ENCODE measurements at regions of chr16 and their contacts with region 1.

Region 1: GRCh38 chr16:30813821-30814189 is 26.8 kb upstream of the ZNF629 start:
- DNase-seq: no peak
- ATAC-seq: no peak; a peak in 1 of 6 replicates
- H3K4me3 ChIP-seq: peak overlapping the region; percentile 52
- H3K27ac ChIP-seq: peak overlapping the region; percentile 91 to 94
- H3K4me1 ChIP-seq: peaks cover 7% of the 10 kb centered on the region
- CTCF ChIP-seq: no peak
- EP300 ChIP-seq: no peak
- POLR2A ChIP-seq: no peak
- RAD21 ChIP-seq: no peak

Region 2: DNA sequence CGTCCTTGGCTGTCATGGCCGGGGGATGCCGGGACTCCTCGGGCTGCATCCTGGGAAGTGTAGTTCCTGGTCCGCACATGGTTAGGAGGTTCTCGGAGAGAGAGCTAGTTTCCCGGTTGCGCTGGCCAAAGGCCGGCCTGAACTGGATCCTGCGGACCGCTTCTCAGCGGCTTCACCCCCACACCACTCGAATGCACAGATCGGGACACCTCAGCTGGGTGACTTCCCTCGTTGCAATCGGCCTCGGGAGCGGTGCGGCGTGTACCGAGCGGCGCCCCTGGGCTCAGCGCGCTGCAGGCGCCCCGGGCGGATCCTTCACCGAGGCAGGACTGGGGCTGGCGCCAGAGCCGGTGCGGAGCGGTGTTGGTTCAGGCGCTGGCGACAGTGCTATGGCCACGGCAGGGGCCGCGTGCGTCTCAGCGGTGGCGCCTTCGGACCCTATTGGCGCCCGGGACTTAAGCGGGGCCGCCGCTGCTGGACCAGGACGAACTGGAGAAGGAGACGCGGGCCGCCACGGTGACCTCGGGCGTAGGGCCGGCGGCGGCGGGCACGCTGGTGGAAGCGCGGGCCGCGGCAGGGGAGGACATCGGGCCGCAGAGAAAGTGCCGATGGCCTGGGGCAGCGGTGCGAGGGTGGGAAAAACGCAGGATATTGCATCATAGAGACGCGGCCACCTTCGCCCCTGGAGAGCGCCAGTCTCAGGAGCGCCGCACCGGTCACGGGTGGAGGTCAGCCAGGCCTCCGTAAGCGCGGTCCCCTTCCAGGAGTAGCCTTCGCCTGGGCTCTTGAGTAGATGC is 38.2 kb before region 1 on chr16:
- CTCF ChIA-PET with region 1: interaction called, 10 read pairs
- POLR2A ChIA-PET with region 1: interaction called, 7 read pairs
- DNase-seq: peak; percentile 88 to 96
- ATAC-seq: peak; percentile 80 to 89
- H3K4me3 ChIP-seq: peak overlapping the region; percentile 59
- H3K27ac ChIP-seq: peak overlapping the region; percentile 91 to 99
- H3K4me1 ChIP-seq: peaks cover 11% of the 10 kb centered on the region
- CTCF ChIP-seq: no peak
- EP300 ChIP-seq: no peak
- POLR2A ChIP-seq: peak; percentile 71
- RAD21 ChIP-seq: no peak

Region 3: DNA sequence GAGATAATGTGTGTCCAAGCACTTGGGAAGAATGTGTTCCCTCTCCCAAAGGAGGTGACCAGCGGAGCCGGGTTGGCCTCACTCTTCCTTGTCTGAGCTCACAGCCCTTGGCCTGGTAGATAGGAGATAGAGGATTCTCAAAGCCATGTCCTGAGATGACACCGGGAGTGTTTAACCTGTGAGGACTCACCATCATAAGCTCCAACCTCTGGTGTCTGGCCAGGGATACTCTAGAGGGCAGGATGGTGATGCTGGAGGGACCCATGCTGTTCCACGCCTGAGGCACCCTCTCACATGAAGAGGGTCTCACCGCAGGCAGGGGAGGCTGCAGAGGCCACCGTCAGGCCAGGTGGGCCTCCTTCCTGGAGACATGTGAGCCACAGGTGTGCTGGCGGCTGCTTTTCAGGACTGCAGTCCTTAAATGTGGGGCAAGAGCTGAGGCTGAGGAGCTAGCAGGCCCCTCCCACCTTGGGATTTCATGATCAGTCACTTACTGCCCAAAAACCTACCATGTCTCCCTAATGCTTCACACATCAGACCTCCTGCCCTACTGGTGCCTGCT is 20.2 kb before region 1 on chr16:
- CTCF ChIA-PET with region 1: interaction called, 20 read pairs
- POLR2A ChIA-PET with region 1: no interaction called
- DNase-seq: no peak
- ATAC-seq: peak; percentile 27 to 30; a peak in 3 of 6 replicates
- H3K4me3 ChIP-seq: no peak overlapping the region
- H3K27ac ChIP-seq: no peak overlapping the region
- H3K4me1 ChIP-seq: no peaks in the 10 kb centered on the region
- CTCF ChIP-seq: no peak
- EP300 ChIP-seq: no peak
- POLR2A ChIP-seq: no peak
- RAD21 ChIP-seq: no peak

Region 4: DNA sequence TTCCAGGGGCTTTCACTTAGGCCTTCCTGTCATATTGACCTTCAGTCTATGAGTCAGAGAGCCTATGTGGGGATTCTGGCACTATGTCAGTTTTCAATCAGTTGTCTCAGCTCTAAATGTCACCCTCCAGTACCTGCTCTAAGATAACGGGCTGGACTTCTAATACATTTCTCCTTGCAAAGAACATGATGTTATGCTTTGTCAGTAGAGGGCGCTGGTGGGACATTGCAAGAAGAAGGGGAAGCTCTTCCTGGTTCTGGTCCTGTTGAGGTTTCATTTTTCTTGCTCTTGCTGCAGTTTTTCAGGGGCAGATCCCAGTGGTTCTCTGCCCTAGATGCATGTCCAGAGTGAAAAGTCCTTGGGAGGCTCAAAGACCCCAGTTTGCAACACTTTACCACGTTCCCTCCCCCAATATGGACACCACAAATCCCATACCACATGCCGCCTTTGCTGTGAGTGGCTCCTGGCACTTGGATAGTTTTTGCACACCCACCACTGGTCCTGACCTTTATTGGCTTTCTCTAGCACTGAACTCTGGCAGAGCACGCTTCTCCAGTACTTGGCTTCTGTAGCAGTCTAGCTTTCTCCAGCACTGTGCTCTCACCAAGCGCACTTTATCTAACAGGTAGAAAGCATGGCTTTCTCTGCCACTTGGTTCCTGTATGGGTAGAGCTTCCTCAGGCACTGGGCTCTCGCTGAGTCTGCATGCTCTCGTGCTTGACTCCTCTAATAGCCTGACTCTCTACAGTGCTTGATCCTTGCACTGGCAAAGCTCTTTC is 31.1 kb after region 1 on chr16:
- CTCF ChIA-PET with region 1: interaction called, 17 read pairs
- POLR2A ChIA-PET with region 1: interaction called, 3 read pairs
- DNase-seq: peak; percentile 87 to 90
- ATAC-seq: peak; percentile 89 to 97
- H3K4me3 ChIP-seq: no peak overlapping the region
- H3K27ac ChIP-seq: peak overlapping the region; percentile 50 to 58; a peak in 5 of 6 replicates
- H3K4me1 ChIP-seq: peaks cover 11% of the 10 kb centered on the region
- CTCF ChIP-seq: peak; percentile 88
- EP300 ChIP-seq: no peak
- POLR2A ChIP-seq: no peak
- RAD21 ChIP-seq: peak; percentile 84 to 91

Region 5: GRCh38 chr16:30893744-30894539 is 80.1 kb after region 1 on chr16 and contains the start of gene BCL7C:
- CTCF ChIA-PET with region 1: interaction called, 12 read pairs
- POLR2A ChIA-PET with region 1: no interaction called
- DNase-seq: peak; percentile 67 to 93
- ATAC-seq: peak; percentile 86 to 87
- H3K4me3 ChIP-seq: peak within 1 kb of the TSS; percentile 56
- H3K27ac ChIP-seq: peak within 1 kb of the TSS; percentile 79 to 95
- H3K4me1 ChIP-seq: peaks cover 34% of the 10 kb centered on the region
- CTCF ChIP-seq: peak; percentile 67
- EP300 ChIP-seq: no peak
- POLR2A ChIP-seq: peak; percentile 81
- RAD21 ChIP-seq: peak in 1 of 2 experiments; percentile 49; a peak in 2 of 5 replicates
- polyA plus RNA-seq, gene BCL7C: 9.5 and 10.8 TPM in 2 replicates

Region 6: DNA sequence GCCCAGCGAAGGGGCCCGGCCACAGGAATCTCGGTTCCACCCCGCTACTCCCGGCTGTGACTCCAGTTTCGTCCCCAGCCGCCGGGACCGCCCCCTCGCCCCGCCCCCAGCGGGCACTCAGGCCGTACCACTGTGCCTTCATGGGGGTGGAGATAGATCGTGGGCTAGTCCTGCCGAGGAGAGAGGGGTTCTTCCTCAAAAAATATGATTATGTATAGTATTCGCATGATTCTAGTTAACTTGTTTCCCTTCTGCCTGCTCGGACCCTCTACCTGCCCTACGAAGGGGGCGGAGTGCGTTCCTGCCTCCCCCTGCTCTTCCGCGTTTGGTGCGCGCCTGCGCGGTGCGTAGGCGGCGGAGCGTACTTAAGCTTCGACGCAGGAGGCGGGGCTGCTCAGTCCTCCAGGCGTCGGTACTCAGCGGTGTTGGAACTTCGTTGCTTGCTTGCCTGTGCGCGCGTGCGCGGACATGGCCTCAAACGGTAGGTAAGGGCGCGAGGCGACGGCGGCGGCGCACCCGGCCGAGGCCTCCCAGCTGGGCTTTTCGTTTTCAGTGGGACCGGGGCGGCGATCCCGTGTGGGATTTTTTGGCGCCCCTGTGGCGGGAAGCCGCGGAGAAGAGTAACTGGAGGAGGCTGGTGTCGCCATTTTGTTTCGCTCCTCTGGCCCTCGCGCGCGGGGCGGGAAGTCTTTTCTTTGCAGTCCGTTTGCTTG is 366.1 kb after region 1 on chr16 and contains the start of gene FUS:
- CTCF ChIA-PET with region 1: no interaction called
- POLR2A ChIA-PET with region 1: no interaction called
- DNase-seq: peak; percentile 91 to 93
- ATAC-seq: peak; percentile 75 to 77
- H3K4me3 ChIP-seq: peak within 1 kb of the TSS; percentile 68
- H3K27ac ChIP-seq: peak within 1 kb of the TSS; percentile 92 to 97
- H3K4me1 ChIP-seq: peaks cover 29% of the 10 kb centered on the region
- CTCF ChIP-seq: no peak
- EP300 ChIP-seq: no peak
- POLR2A ChIP-seq: peak; percentile 100
- RAD21 ChIP-seq: no peak
- polyA plus RNA-seq, gene FUS: 168 and 224 TPM in 2 replicates